ENCODE measurements at regions of chr6 and their contacts with region 1.

Region 1: DNA sequence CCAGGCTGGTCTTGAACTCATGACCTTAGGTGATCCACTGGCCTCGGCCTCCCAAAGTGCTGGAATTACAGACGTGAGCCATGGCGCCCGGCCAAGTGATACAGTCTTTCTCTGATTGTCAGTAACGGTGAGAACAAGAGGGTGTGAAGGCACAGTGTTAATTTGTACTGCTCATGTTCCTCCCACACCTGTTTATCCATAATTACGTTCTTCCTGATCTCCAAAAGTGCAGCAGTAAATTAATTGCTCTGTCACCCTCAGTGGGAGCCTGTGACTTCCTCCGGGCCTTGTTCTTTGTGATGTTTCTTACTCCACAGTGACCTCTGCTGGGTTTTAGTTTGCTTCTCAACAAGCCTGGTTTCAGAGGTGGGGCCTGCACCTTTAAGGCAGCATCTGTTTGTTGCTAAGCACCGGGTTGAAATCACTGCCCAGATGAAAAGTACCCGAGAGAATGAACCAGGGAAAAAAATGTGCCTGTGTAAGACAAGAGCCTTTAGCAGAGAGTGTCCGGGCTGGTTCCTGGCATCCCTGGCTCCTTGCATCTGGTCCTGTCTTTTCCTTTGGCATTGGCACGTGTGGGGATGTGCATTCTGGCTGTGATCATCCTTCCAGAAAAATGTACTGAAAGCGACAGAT is 89.1 kb upstream of the CLDN20 start:
- DNase-seq: peak; percentile 82
- ATAC-seq: peak; percentile 67
- H3K4me3 Mint-ChIP-seq: no peak overlapping the region
- H3K27ac Mint-ChIP-seq: peak overlapping the region; percentile 75
- H3K4me1 Mint-ChIP-seq: peaks cover 42% of the 10 kb centered on the region
- H3K27me3 Mint-ChIP-seq: no peaks in the 10 kb centered on the region

Region 2: DNA sequence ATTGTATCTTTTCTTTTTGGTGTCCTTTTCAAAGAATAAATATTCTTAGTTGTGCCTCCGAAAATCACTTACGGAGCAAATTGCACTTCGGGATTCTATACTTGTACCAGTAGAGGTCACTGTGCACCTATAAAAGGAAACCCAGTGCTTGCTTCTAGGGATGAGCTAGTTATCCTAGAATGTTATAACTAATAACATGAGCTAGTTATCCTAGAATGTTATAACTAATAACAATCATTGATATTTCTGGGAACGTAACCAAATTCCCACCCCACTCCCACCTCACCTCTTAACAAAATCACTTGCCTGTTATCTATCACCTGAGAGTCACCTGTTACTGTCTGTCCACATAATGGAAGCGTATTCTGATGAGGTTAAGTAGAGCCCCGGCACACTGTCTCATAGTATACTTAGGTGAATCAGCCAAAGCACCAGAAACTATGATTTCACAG is 306.5 kb before region 1 on chr6:
- CTCF ChIA-PET with region 1: interaction called, 23 read pairs
- POLR2A ChIA-PET with region 1: no interaction called
- DNase-seq: no peak
- ATAC-seq: no peak
- H3K4me3 Mint-ChIP-seq: no peak overlapping the region
- H3K27ac Mint-ChIP-seq: no peak overlapping the region
- H3K4me1 Mint-ChIP-seq: peaks cover 4% of the 10 kb centered on the region
- H3K27me3 Mint-ChIP-seq: no peaks in the 10 kb centered on the region

Region 3: GRCh38 chr6:155154158-155154830 is 20.4 kb before region 1 on chr6:
- CTCF ChIA-PET with region 1: interaction called, 20 read pairs
- POLR2A ChIA-PET with region 1: interaction called, 22 read pairs
- DNase-seq: peak; percentile 59
- ATAC-seq: peak; percentile 70
- H3K4me3 Mint-ChIP-seq: peak overlapping the region; percentile 69
- H3K27ac Mint-ChIP-seq: peak overlapping the region; percentile 80
- H3K4me1 Mint-ChIP-seq: peaks cover 85% of the 10 kb centered on the region
- H3K27me3 Mint-ChIP-seq: no peaks in the 10 kb centered on the region

Region 4: GRCh38 chr6:155248008-155249001 is 73.6 kb after region 1 on chr6:
- CTCF ChIA-PET with region 1: interaction called, 20 read pairs
- POLR2A ChIA-PET with region 1: no interaction called
- DNase-seq: peak; percentile 25
- ATAC-seq: no peak
- H3K4me3 Mint-ChIP-seq: no peak overlapping the region
- H3K27ac Mint-ChIP-seq: no peak overlapping the region
- H3K4me1 Mint-ChIP-seq: no peaks in the 10 kb centered on the region
- H3K27me3 Mint-ChIP-seq: no peaks in the 10 kb centered on the region

Region 5: DNA sequence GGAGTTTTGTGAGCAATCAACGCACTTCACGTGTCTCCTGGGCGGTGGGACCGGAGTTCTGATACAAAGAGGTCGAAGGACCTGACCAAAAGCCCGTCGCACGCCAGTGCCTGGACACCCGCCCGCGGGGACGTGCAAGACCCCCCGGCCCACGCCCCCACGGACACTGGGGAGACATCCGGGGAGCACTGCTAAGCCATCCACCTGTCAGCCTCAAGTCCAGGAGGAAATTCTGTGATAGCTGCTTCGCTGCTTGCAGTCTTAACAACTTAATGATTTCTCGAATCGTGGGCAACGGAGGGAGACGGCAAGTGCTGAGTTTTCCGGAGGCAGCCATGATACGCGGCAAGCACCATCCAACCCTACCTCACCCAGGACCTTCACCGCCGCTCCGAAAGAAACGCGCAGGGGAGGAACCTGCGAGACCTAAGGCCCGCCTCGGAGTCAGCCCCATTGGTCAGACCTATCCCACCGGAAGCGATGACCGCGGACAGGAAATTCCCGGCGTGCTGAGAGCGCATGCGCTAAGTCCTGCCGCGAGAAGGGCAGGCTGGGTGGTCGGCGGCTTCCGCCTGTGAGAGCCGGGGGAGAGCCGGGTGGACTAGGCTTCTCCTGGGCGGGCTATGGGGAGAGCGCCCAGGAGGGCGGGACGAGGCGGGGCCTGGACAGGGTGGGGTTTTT is 139.5 kb after region 1 on chr6 and contains the start of gene TFB1M:
- CTCF ChIA-PET with region 1: interaction called, 30 read pairs
- POLR2A ChIA-PET with region 1: no interaction called
- DNase-seq: peak; percentile 99
- ATAC-seq: peak; percentile 97
- H3K4me3 Mint-ChIP-seq: peak within 1 kb of the TSS; percentile 98
- H3K27ac Mint-ChIP-seq: peak within 1 kb of the TSS; percentile 97
- H3K4me1 Mint-ChIP-seq: peaks cover 35% of the 10 kb centered on the region
- H3K27me3 Mint-ChIP-seq: peaks cover 5% of the 10 kb centered on the region
- total RNA-seq, gene TFB1M: 34.9 to 35.1 TPM

Measured in activated CD8-positive, alpha-beta T cell treated with anti-CD3 and anti-CD28 coated beads, Interleukin-2, amount 10 ng/mL, durations not matched to agents 7 days and 5 days (primary cell).